A549 (cell line): ENCODE measurements at regions of chr14 and their contacts with region 1.

Region 1: DNA sequence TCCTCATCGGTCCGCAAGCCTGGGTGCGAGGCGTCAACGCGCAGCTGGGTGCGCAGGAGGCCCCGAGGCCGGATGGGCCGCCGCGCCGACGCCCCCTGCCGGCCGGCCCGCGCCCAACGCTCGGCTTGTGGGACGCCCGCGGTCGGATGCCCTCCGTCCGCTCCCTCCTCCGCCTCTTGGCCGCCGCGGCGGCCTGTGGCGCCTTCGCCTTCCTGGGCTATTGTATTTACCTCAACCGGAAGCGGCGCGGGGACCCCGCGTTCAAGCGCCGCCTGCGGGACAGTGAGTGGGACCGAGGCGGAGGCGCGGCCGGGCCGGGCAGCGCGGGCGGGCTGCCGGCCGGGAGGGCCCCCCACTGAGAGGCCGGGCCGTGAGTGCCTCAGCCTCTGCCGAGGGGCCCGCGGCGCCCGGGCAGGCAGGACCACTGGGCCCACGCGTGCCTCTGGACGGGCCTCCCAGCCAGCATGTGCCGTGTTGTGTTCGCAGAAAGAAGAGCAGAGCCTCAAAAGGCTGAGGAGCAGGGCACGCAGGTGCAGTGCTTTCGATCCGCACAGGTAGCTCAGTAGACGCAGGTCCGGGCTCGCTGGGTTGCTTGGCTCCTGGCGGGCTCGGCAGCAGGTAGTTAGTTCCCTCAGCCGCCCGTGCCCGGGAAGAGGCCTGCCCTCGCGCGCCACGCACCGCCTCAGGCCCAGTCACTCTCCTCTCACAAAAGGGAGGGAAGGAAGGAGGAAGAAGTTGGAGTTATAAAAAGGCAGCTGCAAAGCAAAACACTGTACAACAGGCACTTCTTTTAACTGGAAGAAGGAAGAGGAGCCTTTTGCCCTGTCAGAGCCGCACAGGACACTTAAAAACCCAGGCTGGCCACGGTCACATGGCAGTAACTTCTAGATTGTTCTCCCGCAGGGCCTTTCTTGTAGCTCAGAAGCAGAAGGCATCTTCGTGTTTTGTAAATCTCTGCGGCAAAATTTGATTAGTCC is at the start of gene TOMM20L:
- DNase-seq: peak; percentile 65 to 69
- ATAC-seq: peak; percentile 98
- H3K4me3 ChIP-seq: peak within 1 kb of the TSS; percentile 51
- H3K27ac ChIP-seq: peak within 1 kb of the TSS; percentile 73 to 95
- H3K4me1 ChIP-seq: peaks cover 20% of the 10 kb centered on the region
- CTCF ChIP-seq: peak; percentile 94
- EP300 ChIP-seq: no peak
- POLR2A ChIP-seq: peak; percentile 17; the same call in 1 of the 2 replicates
- RAD21 ChIP-seq: peak; percentile 22 to 62; a peak in 4 of 5 replicates
- polyA plus RNA-seq, gene TOMM20L: not detected in 2 replicates

Region 2: GRCh38 chr14:58362798-58363412 is 33.2 kb before region 1 on chr14:
- CTCF ChIA-PET with region 1: interaction called, 10 read pairs
- POLR2A ChIA-PET with region 1: no interaction called
- DNase-seq: peak; percentile 18 to 51
- ATAC-seq: peak; percentile 83 to 88; a peak in 5 of 6 replicates
- H3K4me3 ChIP-seq: no peak overlapping the region
- H3K27ac ChIP-seq: no peak overlapping the region
- H3K4me1 ChIP-seq: no peaks in the 10 kb centered on the region
- CTCF ChIP-seq: peak; percentile 46; the same call in 2 of the 3 replicates
- EP300 ChIP-seq: no peak
- POLR2A ChIP-seq: no peak
- RAD21 ChIP-seq: peak in 1 of 2 experiments; percentile 42; a peak in 3 of 5 replicates

Region 3: DNA sequence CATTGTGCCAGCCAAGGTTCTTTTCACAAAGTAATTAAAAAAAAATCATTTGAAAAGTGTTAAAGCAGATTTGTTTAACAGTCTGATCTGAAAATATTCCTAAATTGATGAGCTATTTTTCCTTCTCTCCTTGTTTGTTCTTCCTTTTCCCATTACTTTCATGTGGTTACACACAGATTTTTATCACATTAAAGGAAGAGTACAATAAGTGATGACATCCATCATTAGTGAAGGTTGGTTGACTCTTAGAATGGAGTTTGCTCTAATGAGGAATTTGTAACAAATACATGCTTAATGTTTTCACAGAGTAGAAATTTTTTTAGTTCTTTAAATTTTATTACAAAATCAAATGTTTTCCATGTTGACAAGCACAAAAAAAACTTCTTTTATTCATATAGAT is 19.3 kb before region 1 on chr14:
- CTCF ChIA-PET with region 1: interaction called, 26 read pairs
- POLR2A ChIA-PET with region 1: no interaction called
- DNase-seq: no peak
- ATAC-seq: no peak
- H3K4me3 ChIP-seq: no peak overlapping the region
- H3K27ac ChIP-seq: no peak overlapping the region
- H3K4me1 ChIP-seq: no peaks in the 10 kb centered on the region
- CTCF ChIP-seq: no peak
- EP300 ChIP-seq: no peak
- POLR2A ChIP-seq: no peak
- RAD21 ChIP-seq: no peak